Naive thymus-derived CD4-positive, alpha-beta T cell (primary cell): ENCODE measurements at regions of chr3 and their contacts with region 1.

Region 1: GRCh38 chr3:32401556-32402081 is 10.0 kb downstream of the CMTM7 start:
- DNase-seq: peak in 8 of 9 donors; percentile 45 to 71 (median 64)
- ATAC-seq: peak; percentile 76
- H3K4me3 ChIP-seq: peak overlapping the region; percentile 63
- H3K4me3 Mint-ChIP-seq: peak overlapping the region; percentile 83 to 96 (median 92)
- H3K27ac ChIP-seq: peak overlapping the region; percentile 87
- H3K27ac Mint-ChIP-seq: peak overlapping the region; percentile 92 to 100 (median 99)
- H3K4me1 ChIP-seq: peaks cover 30 to 44% of the 10 kb centered on the region in 2 donors
- H3K4me1 Mint-ChIP-seq: peaks cover 46 to 95% (median 78%) of the 10 kb centered on the region in 7 donors
- H3K27me3 ChIP-seq: no peaks in the 10 kb centered on the region
- H3K27me3 Mint-ChIP-seq: no peaks in the 10 kb centered on the region

Region 2: GRCh38 chr3:32113566-32113965 is 288.1 kb before region 1 on chr3:
- CTCF ChIA-PET with region 1: no interaction called
- POLR2A ChIA-PET with region 1: no interaction called
- intact Hi-C with region 1: loop called in 1 of 2 experiments (anchors 5 kb)
- DNase-seq: no peak
- ATAC-seq: no peak
- H3K4me3 ChIP-seq: no peak overlapping the region
- H3K4me3 Mint-ChIP-seq: peak overlapping the region in 8 of 10 donors; percentile 70 to 90 (median 82)
- H3K27ac ChIP-seq: no peak overlapping the region
- H3K27ac Mint-ChIP-seq: peak overlapping the region in 8 of 9 donors; percentile 74 to 95 (median 92)
- H3K4me1 ChIP-seq: peaks cover 18 to 25% of the 10 kb centered on the region in 2 donors
- H3K4me1 Mint-ChIP-seq: peaks cover 32 to 95% (median 82%) of the 10 kb centered on the region in 7 donors
- H3K27me3 ChIP-seq: no peaks in the 10 kb centered on the region
- H3K27me3 Mint-ChIP-seq: no peaks in the 10 kb centered on the region

Region 3: DNA sequence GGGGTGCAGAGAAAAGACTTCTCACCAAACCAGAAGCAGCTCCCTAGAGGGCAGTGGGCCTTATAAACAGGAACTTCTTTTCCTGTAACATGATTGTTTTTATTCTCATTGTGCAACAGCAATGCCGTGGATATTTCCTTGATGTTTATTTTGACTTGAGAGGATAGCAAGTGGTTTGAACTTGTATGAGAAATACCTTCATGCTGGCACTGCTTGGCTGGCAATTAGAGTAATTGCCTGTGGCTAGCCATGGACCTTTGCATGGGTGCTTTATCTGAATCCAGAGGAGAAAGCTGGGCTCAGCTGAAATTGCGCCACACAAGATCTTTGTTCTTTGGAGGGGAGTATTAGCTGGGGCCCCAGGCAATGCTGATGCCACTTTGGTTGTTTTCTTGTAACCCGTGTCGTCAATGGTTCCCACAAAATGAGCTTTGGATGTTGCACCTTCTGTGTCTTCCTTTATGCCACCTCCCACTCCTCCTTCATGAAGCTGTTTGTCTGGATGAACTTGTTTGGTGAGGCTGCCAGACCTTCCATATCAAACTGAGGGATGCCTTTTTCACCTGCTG is 125.3 kb before region 1 on chr3:
- CTCF ChIA-PET with region 1: no interaction called
- POLR2A ChIA-PET with region 1: no interaction called
- intact Hi-C with region 1: no loop called
- DNase-seq: no peak
- ATAC-seq: no peak
- H3K4me3 ChIP-seq: no peak overlapping the region
- H3K4me3 Mint-ChIP-seq: peak overlapping the region in 4 of 10 donors; percentile 6 to 20 (median 8)
- H3K27ac ChIP-seq: no peak overlapping the region
- H3K27ac Mint-ChIP-seq: peak overlapping the region in 5 of 9 donors; percentile 9 to 84 (median 51)
- H3K4me1 ChIP-seq: no peaks in the 10 kb centered on the region
- H3K4me1 Mint-ChIP-seq: peaks cover 2 to 49% (median 20%) of the 10 kb centered on the region in 7 donors
- H3K27me3 ChIP-seq: no peaks in the 10 kb centered on the region
- H3K27me3 Mint-ChIP-seq: no peaks in the 10 kb centered on the region

Region 4: DNA sequence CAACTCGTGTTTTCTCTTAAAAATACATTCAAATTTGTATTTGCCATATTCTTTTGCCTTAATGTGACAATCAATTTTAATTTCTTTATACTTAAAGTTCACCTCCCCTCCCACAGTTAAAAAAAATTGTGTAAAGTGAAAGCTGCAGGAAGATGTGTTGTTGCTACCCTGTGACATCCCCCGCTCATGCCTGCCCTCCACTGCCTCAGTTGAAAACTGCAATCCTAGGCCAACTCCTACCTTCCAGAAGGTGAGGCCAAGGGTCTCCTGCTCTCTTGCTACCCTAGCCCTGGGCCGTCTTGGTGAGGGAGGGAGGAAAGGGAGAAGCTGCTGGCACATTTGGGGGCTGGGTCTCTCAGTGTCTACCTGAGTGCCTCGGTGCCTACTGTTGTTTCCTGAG is 66.9 kb before region 1 on chr3:
- CTCF ChIA-PET with region 1: interaction called, 3 read pairs
- POLR2A ChIA-PET with region 1: no interaction called
- intact Hi-C with region 1: loop called in 1 of 2 experiments (anchors 2 kb)
- DNase-seq: peak; percentile 15 to 72 (median 65)
- ATAC-seq: peak; percentile 83
- H3K4me3 ChIP-seq: no peak overlapping the region
- H3K4me3 Mint-ChIP-seq: peak overlapping the region; percentile 5 to 87 (median 66)
- H3K27ac ChIP-seq: peak overlapping the region; percentile 49
- H3K27ac Mint-ChIP-seq: peak overlapping the region; percentile 78 to 96 (median 92)
- H3K4me1 ChIP-seq: peaks cover 0 to 32% of the 10 kb centered on the region in 2 donors
- H3K4me1 Mint-ChIP-seq: peaks cover 39 to 67% (median 60%) of the 10 kb centered on the region in 7 donors
- H3K27me3 ChIP-seq: no peaks in the 10 kb centered on the region
- H3K27me3 Mint-ChIP-seq: no peaks in the 10 kb centered on the region

Region 5: DNA sequence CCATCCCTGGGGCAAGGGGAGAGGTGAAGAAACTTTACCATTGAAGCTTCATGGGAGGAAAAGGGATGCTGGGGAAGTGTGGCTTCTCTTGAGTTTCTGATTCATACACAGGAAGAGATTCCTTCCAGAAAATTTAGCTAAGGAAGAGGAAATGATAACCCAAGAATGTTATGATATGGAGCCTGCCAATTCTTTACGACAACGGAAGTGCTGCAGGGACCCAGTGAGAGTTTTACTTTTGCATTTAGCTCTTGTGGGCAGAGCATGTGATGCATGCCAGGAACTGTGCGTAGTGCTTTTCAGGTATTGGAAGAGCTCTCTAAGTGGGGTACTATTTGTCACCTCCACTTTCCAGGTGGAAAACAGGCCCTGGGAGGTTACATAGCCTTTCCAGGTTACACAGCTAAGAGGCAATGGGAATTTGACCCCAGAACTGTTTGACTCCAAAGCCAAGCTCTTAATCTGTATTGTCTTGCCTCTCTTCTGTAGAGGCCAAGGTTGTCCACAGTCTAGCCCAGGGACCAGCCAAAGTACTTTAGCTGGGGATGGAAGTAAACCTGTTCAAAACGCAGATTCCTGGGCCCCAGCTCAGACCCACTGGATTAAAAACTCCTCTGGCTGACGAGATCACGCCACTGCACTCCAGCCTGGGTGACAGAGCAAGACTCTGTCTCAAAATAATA is 13.0 kb after region 1 on chr3:
- CTCF ChIA-PET with region 1: interaction called, 8 read pairs
- POLR2A ChIA-PET with region 1: interaction called, 88 read pairs
- intact Hi-C with region 1: loop called (anchors 1 to 2 kb)
- DNase-seq: peak in 7 of 9 donors; percentile 61 to 78 (median 69)
- ATAC-seq: peak; percentile 94
- H3K4me3 ChIP-seq: no peak overlapping the region
- H3K4me3 Mint-ChIP-seq: peak overlapping the region; percentile 56 to 78 (median 68)
- H3K27ac ChIP-seq: peak overlapping the region; percentile 81
- H3K27ac Mint-ChIP-seq: peak overlapping the region; percentile 93 to 99 (median 98)
- H3K4me1 ChIP-seq: peaks cover 17 to 65% of the 10 kb centered on the region in 2 donors
- H3K4me1 Mint-ChIP-seq: peaks cover 52 to 96% (median 89%) of the 10 kb centered on the region in 7 donors
- H3K27me3 ChIP-seq: no peaks in the 10 kb centered on the region
- H3K27me3 Mint-ChIP-seq: no peaks in the 10 kb centered on the region

Region 6: DNA sequence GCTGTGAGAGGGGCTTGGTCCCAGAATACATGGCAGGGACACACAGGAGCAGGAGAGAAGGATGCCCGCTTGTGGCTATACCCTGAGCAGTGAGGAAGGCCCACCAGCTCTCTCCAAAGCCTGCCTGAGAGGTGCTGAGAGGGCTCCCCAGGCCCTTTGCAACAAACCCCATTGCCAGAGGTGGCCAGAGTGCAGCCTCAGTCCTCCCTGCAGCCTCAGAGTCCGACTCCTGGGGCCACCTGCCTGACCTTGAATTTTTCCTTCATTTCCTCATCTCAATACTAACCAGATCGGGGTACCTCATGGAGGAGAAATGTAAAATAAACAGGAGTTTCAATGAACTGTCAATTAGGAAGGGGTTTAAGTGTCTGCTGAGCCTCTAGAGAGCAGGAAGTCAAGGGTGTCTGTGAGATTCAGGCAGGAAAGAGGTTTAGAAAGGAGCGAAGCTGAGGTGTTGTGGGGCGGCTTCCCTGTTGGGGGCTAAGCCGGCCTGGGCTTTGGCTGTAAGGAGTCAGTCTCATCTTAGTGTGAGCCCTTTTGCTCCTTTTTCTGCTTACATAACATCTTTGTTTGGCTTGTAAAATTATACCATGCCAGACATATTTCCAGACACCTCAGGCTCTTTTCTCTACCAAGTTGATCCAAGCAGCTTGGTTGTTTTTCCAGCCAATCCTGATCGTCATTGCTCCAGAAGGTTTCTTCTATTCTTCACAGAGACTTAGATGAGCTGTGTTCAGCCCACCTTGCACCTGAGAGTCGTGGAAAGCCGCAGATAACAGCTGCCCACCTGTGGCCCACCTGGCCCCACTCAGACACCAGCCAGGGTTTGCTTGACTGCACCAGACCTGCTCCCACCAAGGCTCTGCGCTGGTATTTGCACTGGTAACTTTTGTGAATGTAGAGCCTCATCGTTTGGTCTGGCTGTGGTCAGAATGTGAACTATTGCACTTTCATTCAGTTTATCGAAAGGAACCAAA is 26.8 kb after region 1 on chr3:
- CTCF ChIA-PET with region 1: interaction called, 4 read pairs
- POLR2A ChIA-PET with region 1: interaction called, 88 read pairs
- intact Hi-C with region 1: loop called (anchors 1 kb)
- DNase-seq: peak in 7 of 9 donors; percentile 45 to 58 (median 56)
- ATAC-seq: peak; percentile 73
- H3K4me3 ChIP-seq: peak overlapping the region; percentile 30
- H3K4me3 Mint-ChIP-seq: peak overlapping the region; percentile 60 to 85 (median 81)
- H3K27ac ChIP-seq: peak overlapping the region; percentile 76
- H3K27ac Mint-ChIP-seq: peak overlapping the region; percentile 81 to 100 (median 98)
- H3K4me1 ChIP-seq: peaks cover 83% of the 10 kb centered on the region in 2 donors
- H3K4me1 Mint-ChIP-seq: peaks cover 64 to 100% (median 90%) of the 10 kb centered on the region in 7 donors
- H3K27me3 ChIP-seq: no peaks in the 10 kb centered on the region
- H3K27me3 Mint-ChIP-seq: no peaks in the 10 kb centered on the region

Region 7: DNA sequence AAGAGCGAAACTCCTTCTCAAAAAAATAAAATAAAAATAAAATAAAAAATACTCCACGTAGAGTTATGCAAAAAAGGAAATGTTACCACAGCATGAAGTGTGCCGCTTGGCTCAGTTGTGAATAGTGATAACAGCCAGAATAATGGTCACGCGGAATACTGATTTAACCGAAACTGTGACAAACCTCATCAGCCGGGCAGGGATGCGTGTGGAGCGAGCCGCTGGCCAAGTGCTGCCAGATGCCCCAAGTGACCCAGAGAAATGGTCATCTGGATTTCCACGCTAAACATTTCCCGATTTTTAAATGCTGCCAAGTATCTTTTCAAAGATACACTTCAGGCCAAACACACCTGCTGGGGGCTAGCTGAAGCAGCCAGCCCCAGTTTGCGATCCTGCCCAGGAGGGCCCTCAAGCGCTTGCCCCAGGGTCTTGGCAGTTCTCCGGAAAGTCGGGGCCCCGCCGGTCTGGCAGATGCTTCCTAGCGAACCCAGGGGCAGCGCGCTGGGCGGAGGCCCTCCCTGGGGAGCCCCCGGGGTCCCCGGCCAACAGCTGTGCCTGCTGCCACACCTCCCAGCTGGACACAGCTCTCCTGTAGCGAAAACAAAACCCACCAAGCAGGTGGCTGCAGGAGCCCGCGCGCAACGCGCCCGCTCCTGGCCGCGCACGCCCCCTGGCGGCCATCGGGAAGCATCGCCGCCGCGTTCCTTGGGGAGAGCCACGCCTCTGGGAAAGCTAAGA is 65.9 kb after region 1 on chr3:
- CTCF ChIA-PET with region 1: interaction called, 23 read pairs
- POLR2A ChIA-PET with region 1: interaction called, 9 read pairs
- intact Hi-C with region 1: loop called (anchors 1 kb)
- DNase-seq: peak; percentile 59 to 89 (median 78)
- ATAC-seq: peak; percentile 94
- H3K4me3 ChIP-seq: peak overlapping the region; percentile 66
- H3K4me3 Mint-ChIP-seq: peak overlapping the region; percentile 39 to 81 (median 68)
- H3K27ac ChIP-seq: peak overlapping the region; percentile 81
- H3K27ac Mint-ChIP-seq: peak overlapping the region in 7 of 9 donors; percentile 25 to 93 (median 85)
- H3K4me1 ChIP-seq: peaks cover 14 to 25% of the 10 kb centered on the region in 2 donors
- H3K4me1 Mint-ChIP-seq: peaks cover 19 to 62% (median 49%) of the 10 kb centered on the region in 7 donors
- H3K27me3 ChIP-seq: no peaks in the 10 kb centered on the region
- H3K27me3 Mint-ChIP-seq: no peaks in the 10 kb centered on the region

Region 8: DNA sequence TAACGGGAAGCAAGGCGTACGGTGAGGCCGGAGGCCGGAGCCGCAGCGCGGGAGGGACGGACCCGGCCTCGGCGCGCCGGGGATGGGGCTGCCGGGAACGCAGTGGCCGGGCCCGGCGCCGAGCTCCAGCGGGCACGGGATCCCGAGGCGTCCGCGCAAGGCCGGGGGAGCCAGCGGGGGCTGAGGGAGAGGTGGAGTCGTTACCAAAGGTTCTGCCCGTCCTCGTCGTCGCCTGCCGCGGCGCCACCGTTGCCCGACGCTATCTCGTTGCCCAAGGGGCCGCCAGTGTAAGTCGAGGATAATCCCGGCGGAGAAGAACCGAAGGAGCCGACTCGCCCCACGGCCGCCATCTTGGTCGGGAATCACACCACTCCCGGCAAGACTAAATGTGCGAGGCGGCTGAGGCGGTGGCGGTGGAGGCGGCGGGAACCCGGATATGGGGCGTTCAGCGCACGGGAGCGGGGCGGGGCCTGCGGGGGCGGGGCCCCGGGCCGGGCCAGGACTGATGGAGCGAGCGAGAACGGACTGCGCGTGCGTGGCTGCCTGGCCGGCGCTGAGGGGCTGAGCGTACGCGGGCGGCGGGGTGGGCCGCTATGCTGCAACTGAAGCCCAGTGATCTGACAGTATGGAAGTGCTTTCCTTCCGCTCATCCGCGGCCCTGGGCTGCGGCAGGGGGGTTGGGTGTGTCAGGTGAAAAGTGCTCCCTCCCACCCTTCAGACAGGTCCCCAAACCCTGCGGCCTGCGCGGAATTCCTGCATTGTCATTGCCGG is 169.0 kb after region 1 on chr3 and contains the start of gene DYNC1LI1:
- CTCF ChIA-PET with region 1: no interaction called
- POLR2A ChIA-PET with region 1: no interaction called
- intact Hi-C with region 1: no loop called
- DNase-seq: peak; percentile 81 to 96 (median 88)
- ATAC-seq: peak; percentile 98
- H3K4me3 ChIP-seq: peak within 1 kb of the TSS; percentile 68
- H3K4me3 Mint-ChIP-seq: peak within 1 kb of the TSS; percentile 84 to 96 (median 92)
- H3K27ac ChIP-seq: peak within 1 kb of the TSS; percentile 90
- H3K27ac Mint-ChIP-seq: peak within 1 kb of the TSS; percentile 71 to 93 (median 86)
- H3K4me1 ChIP-seq: peaks cover 5 to 17% of the 10 kb centered on the region in 2 donors
- H3K4me1 Mint-ChIP-seq: peaks cover 0 to 39% (median 31%) of the 10 kb centered on the region in 7 donors
- H3K27me3 ChIP-seq: no peaks in the 10 kb centered on the region
- H3K27me3 Mint-ChIP-seq: no peaks in the 10 kb centered on the region
- total RNA-seq, gene DYNC1LI1: 26.1 to 28.5 (median 27.5) TPM